ENCODE measurements at regions of chr2 and their contacts with region 1.

Region 1: DNA sequence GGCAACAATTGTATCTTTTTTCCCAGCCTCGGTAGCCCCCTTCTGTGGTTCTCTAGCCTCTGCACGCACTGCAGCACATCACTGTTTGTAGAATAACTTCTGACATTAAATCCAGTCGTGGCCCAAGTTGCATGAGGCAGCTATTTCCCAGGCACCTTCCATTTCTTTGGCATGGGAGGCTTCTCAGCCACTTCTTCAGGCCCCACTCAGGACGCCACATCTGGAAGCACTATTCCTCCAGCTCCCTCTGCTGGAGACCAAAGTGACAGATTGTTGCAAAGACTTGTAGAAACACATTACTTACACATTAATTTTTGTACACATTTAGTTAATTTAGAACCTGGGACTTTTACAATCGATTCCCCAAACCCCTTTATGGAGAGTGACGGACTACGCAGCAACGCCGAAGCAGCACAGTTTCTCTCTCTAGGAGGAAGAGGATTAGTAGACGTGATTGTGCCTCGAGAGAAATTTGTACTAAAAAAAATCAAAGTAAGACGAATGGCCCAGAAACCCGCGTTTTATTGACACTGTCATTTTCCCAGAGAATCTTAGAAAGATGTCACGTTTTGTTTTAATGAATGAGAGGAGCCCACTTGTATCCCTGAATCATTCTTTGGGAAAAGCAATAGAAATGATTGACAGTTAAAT is 57.8 kb upstream of the RGPD5 start:
- DNase-seq: peak; percentile 56
- ATAC-seq: peak; percentile 93
- H3K4me3 ChIP-seq: no peak overlapping the region
- H3K27ac ChIP-seq: no peak overlapping the region
- H3K4me1 ChIP-seq: no peaks in the 10 kb centered on the region
- H3K27me3 ChIP-seq: no peaks in the 10 kb centered on the region
- CTCF ChIP-seq: peak; percentile 72

Region 2: GRCh38 chr2:109365131-109365530 is 371.2 kb before region 1 on chr2:
- intact Hi-C with region 1: no loop called
- DNase-seq: no peak
- ATAC-seq: no peak
- H3K4me3 ChIP-seq: no peak overlapping the region
- H3K27ac ChIP-seq: no peak overlapping the region
- H3K4me1 ChIP-seq: no peaks in the 10 kb centered on the region
- H3K27me3 ChIP-seq: no peaks in the 10 kb centered on the region
- CTCF ChIP-seq: no peak

Region 3: GRCh38 chr2:109545828-109546713 is 190.2 kb before region 1 on chr2:
- intact Hi-C with region 1: loop called (anchors 5 kb)
- DNase-seq: peak; percentile 72
- ATAC-seq: peak; percentile 97
- H3K4me3 ChIP-seq: no peak overlapping the region
- H3K27ac ChIP-seq: no peak overlapping the region
- H3K4me1 ChIP-seq: no peaks in the 10 kb centered on the region
- H3K27me3 ChIP-seq: no peaks in the 10 kb centered on the region
- CTCF ChIP-seq: peak; percentile 88

Region 4: GRCh38 chr2:109637749-109638570 is 98.3 kb before region 1 on chr2:
- intact Hi-C with region 1: no loop called
- DNase-seq: no peak
- ATAC-seq: peak; percentile 76
- H3K4me3 ChIP-seq: no peak overlapping the region
- H3K27ac ChIP-seq: peak overlapping the region; percentile 6
- H3K4me1 ChIP-seq: peaks cover 21% of the 10 kb centered on the region
- H3K27me3 ChIP-seq: no peaks in the 10 kb centered on the region
- CTCF ChIP-seq: no peak

Measured in upper lobe of right lung (tissue), 1 donor.